Mammary epithelial cell (primary cell): ENCODE measurements at regions of chr2 and their contacts with region 1.

Region 1: GRCh38 chr2:38315707-38316333 is 61.3 kb downstream of the ATL2 start:
- DNase-seq: peak; percentile 35
- H3K4me3 ChIP-seq: no peak overlapping the region
- H3K27ac ChIP-seq: no peak overlapping the region
- H3K4me1 ChIP-seq: peaks cover 6% of the 10 kb centered on the region
- H3K27me3 ChIP-seq: no peaks in the 10 kb centered on the region
- CTCF ChIP-seq: peak; percentile 68 to 71

Region 2: DNA sequence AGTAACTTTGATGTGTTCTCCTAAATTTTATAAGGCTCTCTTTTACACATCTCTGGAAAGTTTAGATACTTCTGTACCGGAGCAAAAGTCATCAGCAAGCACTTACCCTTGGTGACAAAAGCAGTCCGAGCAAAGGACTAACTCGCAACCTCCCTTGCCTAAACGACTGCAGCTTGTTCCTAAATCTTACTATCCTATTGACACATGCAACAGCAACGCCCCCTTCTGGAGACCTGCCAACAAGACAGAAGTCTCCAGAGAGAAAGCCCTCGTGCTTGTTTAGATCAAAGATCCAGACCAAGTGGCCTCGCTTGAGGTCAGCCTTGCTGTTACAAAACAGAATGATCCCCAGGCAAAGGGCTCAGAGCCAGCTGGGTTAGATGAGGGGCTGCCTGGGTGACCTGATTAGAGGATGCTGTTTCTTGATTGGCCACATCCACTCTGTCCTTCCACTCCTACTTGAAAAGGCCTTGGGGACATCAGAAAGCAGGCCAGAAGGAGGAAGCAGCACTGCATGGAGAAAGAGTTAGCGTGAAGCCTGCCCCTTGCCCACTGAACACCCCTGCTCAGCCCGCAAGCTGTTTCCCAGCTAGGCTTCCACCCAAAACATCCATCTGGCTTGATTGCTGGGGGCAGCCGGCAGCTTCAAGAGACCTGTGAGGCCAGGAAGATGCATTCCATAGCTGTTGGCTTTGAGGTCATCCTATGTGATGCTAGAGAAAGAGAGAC is 192.7 kb after region 1 on chr2:
- CTCF ChIA-PET with region 1: interaction called, 5 read pairs
- dilution Hi-C with region 1: no loop called
- in situ Hi-C with region 1: loop called (anchors 5 to 10 kb)
- intact Hi-C with region 1: loop called (anchors 1 kb)
- DNase-seq: peak; percentile 70
- H3K4me3 ChIP-seq: no peak overlapping the region
- H3K27ac ChIP-seq: no peak overlapping the region
- H3K4me1 ChIP-seq: peaks cover 24% of the 10 kb centered on the region
- H3K27me3 ChIP-seq: no peaks in the 10 kb centered on the region
- CTCF ChIP-seq: peak; percentile 68 to 75

Region 3: DNA sequence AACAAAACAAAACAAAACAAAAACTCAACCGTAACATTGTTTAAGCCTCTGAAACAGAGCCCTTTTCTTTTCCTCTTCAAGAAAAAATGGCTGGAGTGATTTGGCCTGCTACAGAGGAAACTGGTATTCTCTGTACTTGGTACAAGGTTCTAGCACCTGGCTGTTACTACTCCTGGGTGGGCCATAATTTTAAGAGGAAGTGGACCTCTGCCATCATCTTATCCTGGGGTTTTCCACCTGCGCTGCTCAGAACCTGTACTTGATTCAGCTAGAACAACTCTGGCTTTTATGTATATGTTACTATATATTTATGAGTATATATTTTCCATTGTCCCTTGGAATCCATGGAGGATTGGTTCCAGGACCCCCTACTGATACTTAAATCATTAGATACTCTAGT is 412.9 kb after region 1 on chr2:
- CTCF ChIA-PET with region 1: no interaction called
- dilution Hi-C with region 1: no loop called
- in situ Hi-C with region 1: no loop called
- intact Hi-C with region 1: loop called (anchors 5 kb)
- DNase-seq: no peak
- H3K4me3 ChIP-seq: no peak overlapping the region
- H3K27ac ChIP-seq: no peak overlapping the region
- H3K4me1 ChIP-seq: no peaks in the 10 kb centered on the region
- H3K27me3 ChIP-seq: no peaks in the 10 kb centered on the region
- CTCF ChIP-seq: no peak

Region 4: DNA sequence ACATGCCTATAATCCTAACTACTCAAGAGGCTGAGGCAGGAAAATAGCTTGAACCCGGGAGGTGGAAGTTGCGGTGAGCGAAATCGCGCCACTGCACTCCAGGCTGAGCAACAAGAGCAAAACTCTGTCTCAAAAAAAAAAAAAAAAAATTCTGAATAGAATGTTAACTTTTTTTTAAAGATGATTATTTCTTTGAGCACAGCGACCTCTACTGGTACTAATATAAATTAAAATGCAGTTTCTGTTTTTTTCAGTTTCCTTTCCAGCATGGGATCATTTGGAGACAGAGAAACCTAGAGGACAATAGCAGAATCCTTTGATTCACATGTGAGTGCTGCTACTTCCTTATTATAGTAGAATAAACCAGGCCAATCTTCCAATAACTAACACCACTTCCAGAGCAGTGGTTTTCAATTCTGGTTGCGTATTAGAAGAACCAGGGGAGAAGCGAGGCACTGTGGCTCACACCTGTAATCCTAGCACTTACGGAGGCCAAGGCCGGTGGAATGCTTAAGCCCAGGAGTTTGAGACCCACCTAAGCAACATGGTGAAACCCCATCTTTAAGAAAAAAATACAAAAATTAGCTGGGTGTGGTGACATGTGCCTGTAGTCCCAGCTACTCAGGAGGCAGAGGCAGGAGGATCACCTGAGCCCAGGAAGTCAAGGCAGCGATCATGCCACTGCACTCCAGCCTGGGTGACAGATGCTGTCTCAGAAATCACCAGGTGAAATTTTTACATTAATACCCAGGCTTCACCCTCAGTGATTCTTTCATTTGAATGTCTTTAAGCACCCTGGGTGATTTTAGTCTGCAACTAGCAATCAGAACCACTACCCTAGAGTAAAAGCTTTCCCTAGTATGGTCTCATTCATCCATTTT is 425.3 kb after region 1 on chr2:
- CTCF ChIA-PET with region 1: no interaction called
- dilution Hi-C with region 1: no loop called
- in situ Hi-C with region 1: loop called in 1 of 2 experiments (anchors 10 kb)
- intact Hi-C with region 1: no loop called
- DNase-seq: peak; percentile 16
- H3K4me3 ChIP-seq: no peak overlapping the region
- H3K27ac ChIP-seq: no peak overlapping the region
- H3K4me1 ChIP-seq: no peaks in the 10 kb centered on the region
- H3K27me3 ChIP-seq: no peaks in the 10 kb centered on the region
- CTCF ChIP-seq: peak; percentile 30 to 31